Mammary epithelial cell (primary cell): ENCODE measurements at regions of chr4 and their contacts with region 1.

Region 1: DNA sequence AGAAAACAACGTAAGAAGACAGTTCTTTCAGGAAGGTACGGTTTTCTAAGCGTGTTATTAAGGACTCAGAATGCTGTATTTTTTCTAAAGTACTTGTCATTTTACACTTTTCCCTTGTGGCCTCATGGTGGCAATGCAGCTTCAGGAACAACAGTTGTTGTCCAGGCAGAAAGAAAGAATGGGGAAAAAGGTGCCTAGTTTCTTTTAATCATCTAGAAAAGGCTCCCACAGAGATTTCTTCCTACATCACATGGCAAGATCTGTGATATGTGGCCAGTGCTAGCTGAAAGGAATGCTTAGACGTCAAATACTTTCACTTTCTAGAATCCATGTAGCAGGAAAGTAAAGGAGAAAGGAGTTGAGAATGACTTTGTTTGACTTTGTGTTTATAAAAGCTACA is 49.0 kb upstream of the TRAM1L1 start:
- DNase-seq: peak; percentile 71
- H3K4me3 ChIP-seq: no peak overlapping the region
- H3K27ac ChIP-seq: no peak overlapping the region
- H3K4me1 ChIP-seq: peaks cover 14% of the 10 kb centered on the region
- H3K27me3 ChIP-seq: no peaks in the 10 kb centered on the region
- CTCF ChIP-seq: peak; percentile 69 to 79

Region 2: DNA sequence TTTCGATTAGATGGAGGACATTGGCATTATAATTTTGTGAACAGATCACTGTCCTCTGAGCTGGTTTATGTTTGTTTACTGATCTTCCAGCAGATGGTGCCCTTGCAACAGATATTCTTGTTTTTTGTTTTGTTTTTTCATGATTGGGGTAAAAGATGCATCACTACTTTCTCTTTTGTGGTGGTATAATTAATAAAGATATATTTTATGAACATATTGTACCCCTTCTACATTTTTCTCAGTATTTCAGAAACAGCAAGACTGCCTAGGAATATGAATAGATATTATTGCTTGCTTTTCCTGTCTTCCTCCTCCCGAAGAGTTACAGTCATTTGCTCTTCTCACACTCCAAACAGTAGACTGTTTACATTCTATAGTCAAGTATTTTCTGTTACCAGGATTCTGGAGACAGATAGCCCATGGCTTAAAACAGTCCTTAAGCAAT is 954.2 kb before region 1 on chr4:
- CTCF ChIA-PET with region 1: no interaction called
- dilution Hi-C with region 1: no loop called
- in situ Hi-C with region 1: no loop called
- intact Hi-C with region 1: loop called (anchors 5 kb)
- DNase-seq: peak; percentile 4
- H3K4me3 ChIP-seq: no peak overlapping the region
- H3K27ac ChIP-seq: no peak overlapping the region
- H3K4me1 ChIP-seq: no peaks in the 10 kb centered on the region
- H3K27me3 ChIP-seq: no peaks in the 10 kb centered on the region
- CTCF ChIP-seq: peak; percentile 37 to 55

Region 3: DNA sequence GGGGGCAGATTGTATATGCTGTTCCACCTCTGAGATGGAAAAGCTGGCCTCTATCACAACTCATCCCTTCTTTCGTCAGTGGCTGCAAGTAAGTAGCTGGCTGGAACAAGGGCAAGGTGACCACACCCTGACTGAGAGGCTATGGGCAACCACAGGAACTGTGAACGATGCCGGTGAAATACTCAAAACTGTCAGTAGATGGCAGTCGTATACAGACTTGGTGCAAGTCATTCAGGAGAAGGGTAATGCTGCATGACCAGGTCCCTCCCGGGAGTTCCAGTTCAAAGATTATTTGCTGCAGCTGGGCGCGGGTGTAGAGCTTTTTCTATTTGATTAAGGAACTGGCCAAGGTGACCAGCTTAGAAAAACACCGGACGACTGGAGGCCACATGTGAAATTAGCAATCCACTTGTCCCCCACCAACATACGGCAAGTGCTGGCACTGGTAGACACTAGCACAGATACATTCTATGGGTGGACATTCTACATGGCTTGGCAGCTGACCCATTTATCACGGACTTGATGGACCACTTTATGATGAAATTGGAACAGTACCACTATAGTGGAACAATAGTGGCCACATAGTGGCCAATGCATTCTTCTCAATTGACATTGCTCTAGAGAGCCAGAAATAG is 775.7 kb before region 1 on chr4:
- CTCF ChIA-PET with region 1: no interaction called
- dilution Hi-C with region 1: no loop called
- in situ Hi-C with region 1: no loop called
- intact Hi-C with region 1: loop called (anchors 1 kb)
- DNase-seq: peak; percentile 77
- H3K4me3 ChIP-seq: no peak overlapping the region
- H3K27ac ChIP-seq: no peak overlapping the region
- H3K4me1 ChIP-seq: peaks cover 11% of the 10 kb centered on the region
- H3K27me3 ChIP-seq: no peaks in the 10 kb centered on the region
- CTCF ChIP-seq: peak; percentile 71 to 81

Region 4: GRCh38 chr4:117324851-117325491 is 190.6 kb after region 1 on chr4:
- CTCF ChIA-PET with region 1: no interaction called
- dilution Hi-C with region 1: no loop called
- in situ Hi-C with region 1: no loop called
- intact Hi-C with region 1: loop called (anchors 2 kb)
- DNase-seq: peak; percentile 98
- H3K4me3 ChIP-seq: peak overlapping the region in 2 of 3 experiments; percentile 62 to 80
- H3K27ac ChIP-seq: peak overlapping the region; percentile 98
- H3K4me1 ChIP-seq: peaks cover 12% of the 10 kb centered on the region
- H3K27me3 ChIP-seq: no peaks in the 10 kb centered on the region
- CTCF ChIP-seq: no peak

Region 5: GRCh38 chr4:117491516-117491915 is 357.1 kb after region 1 on chr4:
- CTCF ChIA-PET with region 1: no interaction called
- dilution Hi-C with region 1: no loop called
- in situ Hi-C with region 1: no loop called
- intact Hi-C with region 1: no loop called
- DNase-seq: no peak
- H3K4me3 ChIP-seq: no peak overlapping the region
- H3K27ac ChIP-seq: no peak overlapping the region
- H3K4me1 ChIP-seq: no peaks in the 10 kb centered on the region
- H3K27me3 ChIP-seq: no peaks in the 10 kb centered on the region
- CTCF ChIP-seq: no peak

Region 6: DNA sequence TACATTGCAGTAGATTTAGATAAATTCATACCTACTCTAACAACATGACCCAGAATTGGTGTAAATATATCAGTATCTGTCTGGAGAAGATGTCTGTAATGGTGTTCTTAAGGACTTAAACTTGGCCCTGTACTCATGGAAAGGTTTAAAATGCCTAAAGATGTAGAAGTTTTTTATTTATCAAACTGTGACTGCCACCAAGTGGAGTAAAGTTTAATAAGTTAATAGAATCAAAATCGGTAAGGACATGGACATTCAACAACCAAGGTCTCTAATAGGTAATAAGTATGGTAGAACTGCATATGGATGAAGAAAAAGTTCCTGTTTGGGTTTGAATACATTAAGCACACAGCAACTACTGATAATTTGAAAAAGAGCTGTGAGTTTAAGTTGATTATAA is 425.9 kb after region 1 on chr4:
- CTCF ChIA-PET with region 1: no interaction called
- dilution Hi-C with region 1: no loop called
- in situ Hi-C with region 1: loop called (anchors 10 to 25 kb)
- intact Hi-C with region 1: loop called (anchors 1 kb)
- DNase-seq: peak; percentile 19
- H3K4me3 ChIP-seq: no peak overlapping the region
- H3K27ac ChIP-seq: no peak overlapping the region
- H3K4me1 ChIP-seq: no peaks in the 10 kb centered on the region
- H3K27me3 ChIP-seq: no peaks in the 10 kb centered on the region
- CTCF ChIP-seq: peak; percentile 22 to 26

Region 7: DNA sequence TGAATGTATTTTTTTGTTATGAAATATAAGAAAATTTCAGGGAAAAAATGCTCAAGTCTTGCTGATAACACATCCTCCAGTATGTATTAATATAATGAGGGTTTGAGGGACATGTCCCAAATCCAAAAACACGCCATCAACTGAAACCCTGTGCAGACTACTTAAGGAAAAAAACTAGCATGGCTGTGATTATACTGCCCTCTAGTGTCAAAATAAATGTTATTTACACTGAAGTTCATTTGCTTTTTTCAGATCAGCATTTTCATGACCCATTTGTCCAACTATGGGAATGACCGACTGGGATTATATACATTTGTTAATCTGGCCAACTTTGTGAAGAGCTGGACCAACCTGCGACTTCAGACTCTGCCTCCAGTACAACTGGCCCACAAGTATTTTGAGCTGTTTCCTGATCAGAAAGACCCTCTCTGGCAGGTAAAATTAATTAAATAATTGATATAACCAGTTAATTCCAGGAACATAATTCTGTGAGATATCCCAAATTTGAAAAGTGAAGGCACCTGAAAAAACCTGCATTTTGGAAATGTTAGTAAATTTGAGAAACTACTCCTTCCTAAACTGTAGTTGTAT is 1089.9 kb after region 1 on chr4:
- CTCF ChIA-PET with region 1: no interaction called
- dilution Hi-C with region 1: no loop called
- in situ Hi-C with region 1: no loop called
- intact Hi-C with region 1: loop called (anchors 1 kb)
- DNase-seq: peak; percentile 40
- H3K4me3 ChIP-seq: no peak overlapping the region
- H3K27ac ChIP-seq: no peak overlapping the region
- H3K4me1 ChIP-seq: no peaks in the 10 kb centered on the region
- H3K27me3 ChIP-seq: no peaks in the 10 kb centered on the region
- CTCF ChIP-seq: peak; percentile 52 to 60

Region 8: GRCh38 chr4:118270492-118270891 is 1136.1 kb after region 1 on chr4:
- CTCF ChIA-PET with region 1: no interaction called
- dilution Hi-C with region 1: no loop called
- in situ Hi-C with region 1: no loop called
- intact Hi-C with region 1: loop called (anchors 2 kb)
- DNase-seq: peak; percentile 30
- H3K4me3 ChIP-seq: no peak overlapping the region
- H3K27ac ChIP-seq: no peak overlapping the region
- H3K4me1 ChIP-seq: no peaks in the 10 kb centered on the region
- H3K27me3 ChIP-seq: no peaks in the 10 kb centered on the region
- CTCF ChIP-seq: peak; percentile 53 to 55